Mammary epithelial cell (primary cell): ENCODE measurements at regions of chr12 and their contacts with region 1.

Region 1: DNA sequence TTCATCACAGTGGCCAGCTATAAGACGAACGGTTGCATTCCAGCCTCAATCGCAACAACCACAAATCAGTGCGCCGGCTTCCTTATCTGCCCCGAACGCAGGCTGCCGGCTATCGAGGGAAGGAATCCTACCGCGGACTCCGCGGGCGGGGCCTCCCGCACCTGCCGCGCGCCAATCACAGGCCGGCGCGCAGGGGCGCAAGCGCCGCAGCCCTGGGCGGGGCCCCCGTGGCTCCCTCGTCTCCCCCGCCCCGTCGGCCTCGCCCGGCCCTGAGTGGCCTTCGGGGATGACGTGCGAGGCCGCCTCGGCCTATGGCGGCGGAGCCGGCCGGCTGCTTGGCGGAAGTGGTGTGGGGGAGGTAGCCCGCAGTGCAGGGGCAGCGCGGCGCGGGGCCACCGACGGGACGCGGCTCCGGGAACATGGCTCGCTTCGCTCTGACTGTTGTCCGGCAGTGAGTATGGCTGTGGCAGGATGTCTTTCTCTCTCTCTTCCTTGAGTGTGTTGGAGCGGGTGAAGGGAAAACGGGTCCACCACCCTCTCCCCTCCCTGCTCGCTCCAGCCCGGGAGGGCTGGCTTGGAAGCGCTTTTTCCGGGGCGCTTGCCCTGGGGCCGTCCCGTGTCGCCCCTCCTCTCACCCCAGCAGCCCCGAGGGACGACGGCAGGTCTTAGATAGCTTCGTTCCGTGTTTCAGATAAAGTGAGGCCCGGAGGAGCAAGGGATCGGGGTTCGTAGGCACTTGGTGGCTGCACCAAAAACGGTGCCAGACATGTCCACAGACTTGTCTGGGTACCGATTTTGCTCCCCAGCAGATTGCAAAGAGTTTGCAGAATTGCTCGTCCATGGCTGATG is at the start of gene TIGAR:
- DNase-seq: peak; percentile 97
- H3K4me3 ChIP-seq: peak within 1 kb of the TSS; percentile 87 to 97 (median 90)
- H3K27ac ChIP-seq: peak within 1 kb of the TSS; percentile 87
- H3K4me1 ChIP-seq: peaks cover 14% of the 10 kb centered on the region
- H3K27me3 ChIP-seq: no peaks in the 10 kb centered on the region
- CTCF ChIP-seq: no peak
- total RNA-seq, gene TIGAR: 42.8 to 68.2 TPM

Region 2: DNA sequence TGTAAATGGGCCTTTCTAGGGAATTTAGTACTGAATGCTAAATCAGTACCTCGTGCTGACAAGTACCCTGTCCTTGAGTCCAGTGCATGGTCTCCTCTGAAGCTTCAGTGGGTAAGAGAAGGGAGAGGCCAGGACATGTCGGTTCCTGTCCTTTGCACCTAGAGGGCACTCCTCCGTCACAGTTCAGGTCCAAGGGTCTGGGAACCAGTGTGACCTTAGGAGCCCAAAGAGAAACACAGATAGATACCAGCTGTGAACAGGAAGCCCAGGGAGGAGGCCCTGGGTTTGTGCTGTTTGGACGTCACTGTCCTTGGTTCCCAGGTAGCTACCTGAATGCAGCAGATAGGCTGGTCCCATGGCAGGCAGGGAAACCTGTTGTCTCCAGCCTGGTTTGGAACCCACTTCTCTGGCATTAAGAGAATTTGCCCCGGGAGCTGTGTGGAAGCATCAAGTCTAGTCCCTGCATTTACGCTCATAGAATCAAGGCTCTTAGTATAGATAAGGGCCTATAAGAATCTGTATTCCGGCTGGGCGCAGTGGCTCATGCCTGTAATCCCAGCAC is 62.3 kb after region 1 on chr12:
- CTCF ChIA-PET with region 1: no interaction called
- dilution Hi-C with region 1: loop called (anchors 10 kb)
- in situ Hi-C with region 1: no loop called
- intact Hi-C with region 1: no loop called
- DNase-seq: no peak
- H3K4me3 ChIP-seq: no peak overlapping the region
- H3K27ac ChIP-seq: no peak overlapping the region
- H3K4me1 ChIP-seq: no peaks in the 10 kb centered on the region
- H3K27me3 ChIP-seq: peaks cover 2% of the 10 kb centered on the region
- CTCF ChIP-seq: no peak

Region 3: DNA sequence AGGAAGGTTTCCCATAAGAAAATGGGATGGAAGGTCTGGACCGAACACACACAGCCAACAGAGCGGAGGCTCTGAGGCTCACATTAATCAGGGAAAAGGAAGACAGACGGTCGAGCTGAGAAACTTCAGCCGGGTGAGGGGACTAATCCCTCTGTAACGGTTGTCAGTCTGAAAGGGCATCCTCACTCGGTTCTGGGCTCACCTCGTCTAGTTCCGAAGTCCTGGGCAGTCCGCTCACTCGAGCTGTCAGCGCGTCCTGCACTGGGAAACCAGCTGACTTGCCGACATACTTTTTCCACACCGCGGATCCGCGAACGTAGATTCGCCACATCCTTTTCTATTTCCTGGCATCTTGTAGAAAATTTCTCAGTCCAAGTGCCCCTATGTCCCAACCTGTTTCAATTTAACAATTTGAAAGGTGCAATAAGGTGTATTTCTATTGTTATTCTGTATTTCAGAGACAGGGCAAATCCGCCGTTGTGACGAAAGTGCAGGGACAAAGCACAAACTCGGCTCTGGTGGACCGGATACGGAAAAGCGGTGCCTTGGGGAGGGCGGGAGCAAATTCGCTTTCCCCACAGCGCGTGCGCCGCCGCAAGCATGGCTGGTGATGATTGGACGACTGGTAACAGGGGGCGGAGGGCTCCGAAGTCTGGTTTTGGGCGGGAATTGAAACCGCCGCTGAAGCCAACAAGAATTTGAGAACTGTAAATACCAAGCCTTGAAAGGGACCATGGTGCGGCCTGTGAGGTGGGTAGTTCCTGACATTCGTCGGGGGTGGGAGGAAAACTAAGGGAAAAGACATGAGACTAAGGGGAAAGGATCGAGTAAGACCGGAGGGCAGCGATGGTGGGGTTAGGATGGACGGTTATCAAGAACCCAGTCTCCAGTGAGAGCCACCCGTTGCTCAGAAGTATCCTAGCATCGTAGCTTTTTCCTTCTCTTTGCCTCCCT is 217.4 kb after region 1 on chr12 and contains the start of gene RAD51AP1:
- CTCF ChIA-PET with region 1: no interaction called
- dilution Hi-C with region 1: no loop called
- in situ Hi-C with region 1: loop called in 1 of 2 experiments (anchors 25 kb)
- intact Hi-C with region 1: no loop called
- DNase-seq: peak; percentile 95
- H3K4me3 ChIP-seq: peak within 1 kb of the TSS; percentile 76 to 100 (median 99)
- H3K27ac ChIP-seq: peak within 1 kb of the TSS; percentile 99
- H3K4me1 ChIP-seq: peaks cover 14% of the 10 kb centered on the region
- H3K27me3 ChIP-seq: no peaks in the 10 kb centered on the region
- CTCF ChIP-seq: no peak
- total RNA-seq, gene RAD51AP1: 3.0 to 23.4 TPM

Region 4: GRCh38 chr12:5789469-5789968 is 1468.4 kb after region 1 on chr12:
- CTCF ChIA-PET with region 1: no interaction called
- dilution Hi-C with region 1: no loop called
- in situ Hi-C with region 1: no loop called
- intact Hi-C with region 1: no loop called
- DNase-seq: peak; percentile 56
- H3K4me3 ChIP-seq: no peak overlapping the region
- H3K27ac ChIP-seq: no peak overlapping the region
- H3K4me1 ChIP-seq: no peaks in the 10 kb centered on the region
- H3K27me3 ChIP-seq: no peaks in the 10 kb centered on the region
- CTCF ChIP-seq: no peak